GM23248 (cell line): ENCODE measurements at regions of chr10 and their contacts with region 1.

Region 1: DNA sequence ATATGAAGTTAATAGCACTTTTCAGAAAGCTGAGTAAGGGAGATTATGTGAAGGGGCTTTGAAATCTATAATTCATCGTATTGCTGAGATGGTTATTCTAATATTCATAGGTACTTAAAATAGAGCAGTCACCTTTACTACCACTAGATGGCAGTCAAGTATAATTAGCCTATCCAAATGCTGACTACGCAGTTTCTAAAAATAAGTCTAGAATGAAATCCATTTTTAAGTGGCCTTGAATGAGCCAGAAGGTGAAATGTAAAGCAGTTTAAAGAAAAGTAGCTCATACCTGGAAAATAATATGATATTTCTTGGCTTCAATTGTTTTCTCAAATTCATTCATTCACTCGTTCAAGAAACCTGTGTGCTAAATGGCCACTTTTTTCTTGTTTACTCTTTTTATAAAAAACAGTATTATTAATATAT is 1277.1 kb downstream of the GATA3 start:
- DNase-seq: peak; percentile 69
- H3K4me3 ChIP-seq: no peak overlapping the region
- H3K27ac ChIP-seq: no peak overlapping the region
- H3K4me1 ChIP-seq: no peaks in the 10 kb centered on the region
- H3K27me3 ChIP-seq: peaks cover 8% of the 10 kb centered on the region; the same call in 1 of the 2 replicates

Region 2: DNA sequence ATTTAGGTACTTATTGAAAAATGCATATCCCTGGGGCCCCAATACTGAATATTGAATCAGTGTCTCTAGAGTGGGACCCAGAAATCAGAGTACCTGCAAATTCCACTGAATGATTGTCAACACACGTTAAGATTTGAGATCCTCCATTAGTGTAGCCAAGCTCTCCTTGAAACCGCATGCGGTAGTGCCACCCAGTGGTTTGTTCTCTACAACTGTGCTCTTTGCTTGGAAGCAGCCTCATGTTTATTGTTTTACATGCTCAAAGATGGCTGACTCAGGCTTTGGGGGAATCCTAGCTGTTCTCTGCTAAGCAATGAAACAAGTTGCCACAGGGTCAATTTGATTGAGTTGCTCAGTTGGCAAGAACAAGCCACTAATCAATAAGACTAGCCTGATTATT is 1345.9 kb after region 1 on chr10:
- in situ Hi-C with region 1: loop called (anchors 10 kb)
- DNase-seq: peak; percentile 82
- H3K4me3 ChIP-seq: no peak overlapping the region
- H3K27ac ChIP-seq: no peak overlapping the region
- H3K4me1 ChIP-seq: no peaks in the 10 kb centered on the region
- H3K27me3 ChIP-seq: no peaks in the 10 kb centered on the region

Region 3: GRCh38 chr10:11036407-11037011 is 1704.9 kb after region 1 on chr10:
- in situ Hi-C with region 1: loop called (anchors 25 kb)
- DNase-seq: peak; percentile 68
- H3K4me3 ChIP-seq: no peak overlapping the region
- H3K27ac ChIP-seq: no peak overlapping the region
- H3K4me1 ChIP-seq: peaks cover 19% of the 10 kb centered on the region
- H3K27me3 ChIP-seq: no peaks in the 10 kb centered on the region